Dorsolateral prefrontal cortex (tissue), 120 donors: ENCODE measurements at regions of chr3 and their contacts with region 1.

Region 1: DNA sequence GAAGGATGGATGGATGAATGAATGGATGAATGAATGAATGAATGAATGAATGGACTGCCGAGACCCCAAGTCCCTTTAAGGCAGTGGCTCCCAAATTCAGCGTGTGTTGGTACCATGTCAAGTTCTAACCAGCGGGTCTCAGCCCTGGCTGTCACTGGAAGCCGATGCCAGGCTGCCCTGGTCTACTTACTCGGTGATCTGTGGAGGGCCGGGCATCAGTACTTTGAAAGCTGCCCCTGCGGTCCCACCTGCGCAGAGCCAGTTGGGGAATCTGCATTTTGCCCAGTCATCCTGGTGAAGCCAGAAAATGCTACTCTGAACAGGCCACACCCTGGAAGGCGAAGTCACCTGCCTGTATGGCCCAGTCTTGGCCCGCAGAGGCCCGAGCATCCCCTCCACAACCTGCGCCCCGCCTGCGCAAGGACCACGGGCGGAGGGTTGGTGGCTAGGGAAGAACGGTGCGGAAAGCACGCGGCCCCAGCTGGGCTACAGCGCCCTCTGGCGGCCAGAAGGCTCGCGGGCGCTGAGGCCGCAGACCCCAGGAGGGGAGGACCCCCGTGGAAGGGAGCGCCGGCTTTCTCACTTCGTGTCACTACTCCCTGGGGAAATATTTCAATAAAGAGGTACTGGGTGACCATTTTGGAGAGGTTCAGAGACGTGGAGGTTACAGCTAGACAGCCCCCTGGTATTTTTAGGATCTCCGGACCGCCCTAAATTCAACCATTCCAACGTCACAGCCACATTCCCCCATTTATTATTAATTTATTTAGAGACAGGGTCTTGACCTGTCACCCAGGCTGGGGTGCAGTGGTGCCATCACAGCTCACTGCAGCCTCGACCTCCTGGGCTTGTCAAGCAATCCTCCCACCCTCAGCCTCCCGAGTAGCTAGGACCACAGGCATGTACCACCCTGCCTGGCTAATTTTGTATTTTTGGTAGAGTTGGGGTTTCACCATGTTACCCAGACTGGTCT is 34.9 kb downstream of the PRKCD start:
- DNase-seq: peak in 3 of 10 donors; percentile 30 to 67 (median 33)
- H3K4me3 ChIP-seq: peak overlapping the region in 6 of 59 donors; percentile 9 to 33 (median 24)
- H3K27ac ChIP-seq: no peak overlapping the region
- H3K27me3 ChIP-seq: no peaks in the 10 kb centered on the region
- CTCF ChIP-seq: peak; percentile 92 to 100 (median 98)

Region 2: GRCh38 chr3:52851348-52851747 is 344.5 kb before region 1 on chr3:
- intact Hi-C with region 1: loop called in 1 of 2 experiments (anchors 5 kb)
- DNase-seq: peak in 1 of 10 donors; percentile 19
- H3K4me3 ChIP-seq: no peak overlapping the region
- H3K27ac ChIP-seq: peak overlapping the region in 2 of 59 donors; percentile 14 to 36
- H3K27me3 ChIP-seq: no peaks in the 10 kb centered on the region
- CTCF ChIP-seq: peak in 53 of 56 donors; percentile 25 to 76 (median 54)

Region 3: GRCh38 chr3:53056442-53056841 is 139.4 kb before region 1 on chr3:
- intact Hi-C with region 1: no loop called
- DNase-seq: no peak
- H3K4me3 ChIP-seq: no peak overlapping the region
- H3K27ac ChIP-seq: no peak overlapping the region
- H3K27me3 ChIP-seq: no peaks in the 10 kb centered on the region
- CTCF ChIP-seq: no peak

Region 4: DNA sequence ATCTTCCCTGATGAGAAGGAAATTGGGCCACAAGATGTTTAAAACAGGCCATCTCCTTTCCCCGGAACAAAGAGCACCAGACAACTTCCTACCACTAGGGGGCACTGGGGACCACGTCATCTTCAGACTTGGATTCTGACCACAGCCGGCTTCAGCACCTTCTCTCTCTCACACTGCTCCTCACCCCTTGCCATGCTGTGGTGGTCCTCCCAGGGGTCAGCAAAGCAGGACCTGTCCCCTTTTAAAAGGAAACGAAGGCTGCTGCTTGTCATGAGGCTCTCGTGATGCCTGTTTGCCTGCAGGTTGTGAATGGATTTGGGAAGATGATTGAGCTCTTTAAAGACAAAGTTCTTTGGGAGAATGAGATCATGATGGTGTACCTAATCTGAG is 81.9 kb before region 1 on chr3:
- intact Hi-C with region 1: loop called (anchors 1 to 2 kb)
- DNase-seq: peak; percentile 66 to 89 (median 83)
- H3K4me3 ChIP-seq: no peak overlapping the region
- H3K27ac ChIP-seq: peak overlapping the region in 23 of 59 donors; percentile 8 to 68 (median 44)
- H3K27me3 ChIP-seq: no peaks in the 10 kb centered on the region
- CTCF ChIP-seq: peak; percentile 83 to 97 (median 93)

Region 5: DNA sequence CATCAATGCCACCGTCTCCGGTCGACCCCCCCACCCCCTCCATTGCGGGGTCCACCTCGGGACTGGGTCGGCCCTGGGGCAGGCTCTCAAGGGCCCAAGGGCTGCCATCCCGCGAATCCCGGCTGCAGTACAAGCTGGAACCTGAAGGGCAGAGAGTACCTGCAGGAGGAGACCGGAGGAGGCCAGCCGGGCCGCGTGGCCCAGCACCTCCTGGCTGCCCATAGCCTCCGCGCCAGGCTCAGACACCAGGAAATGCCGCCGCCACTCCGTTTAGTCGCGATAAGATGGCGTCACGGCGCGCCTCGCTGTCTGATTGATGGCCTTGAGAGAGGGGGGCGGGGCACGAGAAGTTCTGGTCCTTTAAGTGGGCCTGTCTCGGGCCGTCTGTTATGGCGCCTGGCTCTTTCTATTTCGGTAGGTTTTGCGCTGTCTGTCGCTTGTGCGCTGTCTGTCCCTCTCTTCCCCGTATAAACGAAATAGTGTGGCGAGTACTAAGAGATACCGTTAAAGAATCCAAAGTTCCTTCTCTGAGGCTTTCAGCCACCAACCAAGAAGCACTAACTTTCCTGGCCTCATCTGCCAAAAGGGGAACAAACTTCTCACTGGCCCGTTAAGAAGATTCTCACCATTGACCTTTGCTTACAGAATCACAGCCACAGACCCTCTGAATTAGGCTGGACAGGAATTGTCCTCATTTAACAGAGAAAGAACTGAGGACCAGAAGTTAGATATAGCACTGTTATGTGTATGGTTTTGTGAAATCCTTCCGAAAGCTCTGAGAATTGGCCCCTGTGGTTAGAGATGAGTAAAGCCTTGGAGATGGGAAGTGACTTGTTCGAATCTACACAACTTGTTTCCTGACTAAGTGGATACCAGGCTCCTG is 65.5 kb before region 1 on chr3 and contains the start of gene RFT1:
- intact Hi-C with region 1: loop called (anchors 1 to 5 kb)
- DNase-seq: peak; percentile 95 to 99 (median 97)
- H3K4me3 ChIP-seq: peak within 1 kb of the TSS; percentile 72 to 99 (median 93)
- H3K27ac ChIP-seq: peak within 1 kb of the TSS; percentile 35 to 94 (median 84)
- H3K27me3 ChIP-seq: no peaks in the 10 kb centered on the region
- CTCF ChIP-seq: peak in 44 of 56 donors; percentile 7 to 60 (median 37)
- total RNA-seq, gene RFT1: 8.0 to 22.2 (median 15.5) TPM

Region 6: DNA sequence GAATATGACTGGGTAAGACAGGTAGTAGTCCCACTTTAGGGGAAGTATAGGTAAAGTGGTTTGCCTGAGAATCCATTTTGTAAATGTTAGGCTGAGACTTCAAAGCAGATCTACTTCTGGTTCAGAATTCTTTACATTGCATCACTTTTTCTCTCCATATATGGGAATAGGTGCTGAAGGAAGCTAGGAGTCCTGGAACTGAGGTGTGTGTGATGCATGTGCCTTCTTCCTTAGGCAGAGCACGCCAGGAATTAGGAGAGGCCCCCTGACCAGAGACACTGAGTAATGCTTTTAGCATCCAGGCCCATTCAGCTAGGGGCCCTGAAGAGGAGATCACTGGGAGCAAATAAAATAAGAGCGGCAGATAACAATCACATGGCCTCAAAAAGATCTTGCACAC is 220.6 kb after region 1 on chr3:
- intact Hi-C with region 1: no loop called
- DNase-seq: no peak
- H3K4me3 ChIP-seq: no peak overlapping the region
- H3K27ac ChIP-seq: no peak overlapping the region
- H3K27me3 ChIP-seq: peaks cover 0 to 4% (median 0%) of the 10 kb centered on the region in 45 donors
- CTCF ChIP-seq: no peak